ENCODE measurements at regions of chr2 and their contacts with region 1.

Region 1: DNA sequence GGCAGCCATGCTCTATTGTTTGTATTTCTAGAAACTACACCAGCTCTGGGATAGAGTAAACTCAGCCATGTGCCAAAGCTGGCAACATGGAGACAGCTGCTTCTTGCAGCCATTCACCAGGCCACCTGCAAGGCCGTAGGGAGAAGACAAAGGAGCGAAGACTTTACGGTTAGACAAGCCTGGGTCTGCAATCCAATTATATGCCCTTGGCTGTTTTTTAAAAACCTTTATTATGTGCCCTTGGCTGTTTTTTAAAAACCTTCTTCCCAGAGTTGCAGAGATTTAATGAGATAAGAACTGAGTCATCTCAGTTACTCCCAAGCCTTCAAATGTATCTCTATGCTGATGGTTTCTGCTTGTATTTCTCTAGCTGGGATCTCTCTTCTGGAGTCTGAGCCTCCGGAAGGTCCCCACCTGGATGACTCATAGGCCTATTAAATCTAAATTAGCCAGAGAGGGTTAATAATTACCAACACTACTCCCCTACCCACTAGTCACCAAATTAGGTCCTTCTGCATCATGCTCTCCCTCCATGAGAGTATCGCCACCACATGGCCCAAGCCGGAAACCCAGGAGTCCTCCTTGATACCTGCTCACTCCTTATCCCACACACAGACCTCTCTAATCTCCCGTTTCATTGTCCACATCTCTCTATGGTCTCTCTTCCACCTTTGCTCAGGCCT is 17.5 kb upstream of the DPP4 start:
- DNase-seq: peak; percentile 92
- ATAC-seq: peak; percentile 72
- H3K4me3 ChIP-seq: peak overlapping the region; percentile 22; the same call in 1 of the 2 replicates
- H3K27ac ChIP-seq: peak overlapping the region; percentile 99
- H3K4me1 ChIP-seq: peaks cover 65% of the 10 kb centered on the region
- H3K27me3 ChIP-seq: no peaks in the 10 kb centered on the region
- CTCF ChIP-seq: peak; percentile 63

Region 2: GRCh38 chr2:162073888-162074645 is 17.4 kb before region 1 on chr2 and contains the start of gene DPP4:
- CTCF ChIA-PET with region 1: no interaction called
- POLR2A ChIA-PET with region 1: no interaction called
- intact Hi-C with region 1: loop called (anchors 1 kb)
- DNase-seq: peak; percentile 62
- ATAC-seq: peak; percentile 59
- H3K4me3 ChIP-seq: peak within 1 kb of the TSS; percentile 90
- H3K27ac ChIP-seq: peak within 1 kb of the TSS; percentile 25
- H3K4me1 ChIP-seq: peaks cover 42% of the 10 kb centered on the region
- H3K27me3 ChIP-seq: no peaks in the 10 kb centered on the region
- CTCF ChIP-seq: no peak; the same call in 1 of the 2 replicates
- total RNA-seq, gene DPP4: 14.8 and 23.3 TPM in 2 replicates

Measured in PC-3 (cell line).